ENCODE measurements at regions of chr1 and their contacts with region 1.

Region 1: DNA sequence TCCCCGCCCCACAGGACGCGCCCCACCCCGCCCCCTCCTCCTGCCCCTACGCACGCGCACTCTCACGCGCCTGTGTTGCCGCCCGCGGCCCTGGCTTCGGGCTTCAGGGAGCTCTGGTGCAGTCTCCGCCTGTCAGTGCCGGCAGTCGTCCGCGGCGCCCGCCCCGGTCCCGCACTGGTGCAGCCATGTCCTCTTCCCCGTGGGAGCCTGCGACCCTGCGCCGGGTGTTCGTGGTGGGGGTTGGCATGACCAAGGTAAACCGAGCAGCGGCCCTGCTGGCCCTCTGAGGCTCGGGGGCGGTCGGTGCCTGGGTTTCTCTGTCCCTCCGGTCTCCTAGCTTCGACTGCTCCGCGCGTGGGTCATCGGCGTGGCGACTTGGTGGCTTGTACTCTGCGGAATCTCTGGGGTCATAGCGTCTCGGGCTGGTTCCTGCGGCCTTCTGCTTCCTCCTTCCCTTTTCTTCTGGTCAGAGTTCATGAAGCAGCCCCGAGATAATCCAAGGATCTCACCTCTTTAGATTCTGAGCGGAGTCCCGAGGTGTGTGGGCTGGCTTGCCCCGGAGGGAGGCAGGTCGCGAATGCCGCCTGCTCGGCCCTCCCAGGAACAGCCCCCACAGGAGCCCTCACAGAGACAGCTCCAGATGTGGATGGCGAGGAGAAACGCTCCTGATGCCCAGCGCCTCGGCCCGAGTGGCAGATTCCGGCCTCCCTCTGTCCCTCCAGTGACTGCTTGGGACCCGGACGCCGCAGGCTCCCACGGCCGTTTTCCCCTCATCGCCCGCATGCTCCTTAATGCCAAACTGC is at the start of gene SCP2:
- DNase-seq: peak; percentile 60 to 67
- ATAC-seq: peak; percentile 94 to 98
- H3K4me3 ChIP-seq: peak within 1 kb of the TSS; percentile 66
- H3K27ac ChIP-seq: peak within 1 kb of the TSS; percentile 69 to 98
- H3K4me1 ChIP-seq: peaks cover 6% of the 10 kb centered on the region; the same call in 1 of the 3 replicates
- CTCF ChIP-seq: no peak
- EP300 ChIP-seq: no peak
- POLR2A ChIP-seq: peak; percentile 42
- RAD21 ChIP-seq: no peak
- polyA plus RNA-seq, gene SCP2: 74.7 and 124 TPM in 2 replicates

Region 2: DNA sequence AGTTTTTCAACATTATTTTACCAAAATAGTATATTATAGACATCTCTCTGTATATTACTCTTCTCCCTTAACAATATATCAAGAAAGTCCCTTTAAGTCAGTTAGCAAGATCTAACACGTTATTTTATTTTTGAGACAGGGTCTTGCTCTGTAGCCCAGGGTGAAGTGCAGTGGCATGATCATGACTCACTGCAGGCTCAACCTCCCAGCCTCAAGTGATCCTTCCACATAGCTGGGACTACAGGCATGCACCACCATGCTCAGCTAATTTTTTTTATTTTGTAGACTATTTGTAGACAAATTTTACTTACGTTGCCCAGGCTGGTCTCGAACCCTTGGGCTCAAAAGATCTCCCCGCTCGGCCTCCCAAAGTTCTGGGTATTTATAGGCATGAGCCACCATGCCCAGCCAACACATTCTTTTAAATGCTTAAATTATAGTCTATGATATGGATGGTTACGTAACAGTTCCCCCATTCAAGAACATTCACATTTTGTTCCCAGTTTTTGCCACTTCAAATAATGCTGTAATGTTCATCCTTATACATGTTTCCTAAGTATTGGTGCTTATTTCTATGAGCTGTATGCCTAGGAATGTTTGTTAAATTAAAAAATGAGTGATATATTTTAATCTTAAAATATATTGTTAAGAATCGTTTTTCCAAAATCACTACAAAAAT is 444.9 kb before region 1 on chr1:
- CTCF ChIA-PET with region 1: no interaction called
- POLR2A ChIA-PET with region 1: no interaction called
- DNase-seq: no peak
- ATAC-seq: no peak
- H3K4me3 ChIP-seq: no peak overlapping the region
- H3K27ac ChIP-seq: no peak overlapping the region
- H3K4me1 ChIP-seq: no peaks in the 10 kb centered on the region
- CTCF ChIP-seq: no peak
- EP300 ChIP-seq: no peak
- POLR2A ChIP-seq: no peak
- RAD21 ChIP-seq: no peak

Region 3: DNA sequence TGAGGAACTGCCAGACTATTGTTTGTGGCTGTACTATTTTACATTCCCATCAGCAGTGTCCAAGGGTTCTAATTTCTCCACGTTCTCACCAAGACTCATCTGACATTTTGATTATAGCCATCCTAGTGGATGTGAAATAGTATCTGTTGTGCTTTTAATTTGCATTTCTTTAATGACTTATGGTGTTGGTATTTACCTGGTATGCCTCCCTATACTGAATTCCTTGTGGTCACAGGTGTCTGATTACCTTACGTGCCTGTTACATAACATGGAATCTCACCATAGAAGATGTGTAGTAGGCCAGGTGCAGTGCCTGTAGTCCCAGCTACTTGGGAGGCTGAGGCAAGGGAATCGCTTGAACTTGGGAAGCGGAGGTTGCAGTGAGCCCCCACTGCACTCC is 71.4 kb before region 1 on chr1:
- CTCF ChIA-PET with region 1: no interaction called
- POLR2A ChIA-PET with region 1: no interaction called
- DNase-seq: no peak
- ATAC-seq: no peak
- H3K4me3 ChIP-seq: no peak overlapping the region
- H3K27ac ChIP-seq: no peak overlapping the region
- H3K4me1 ChIP-seq: no peaks in the 10 kb centered on the region
- CTCF ChIP-seq: no peak
- EP300 ChIP-seq: no peak
- POLR2A ChIP-seq: no peak
- RAD21 ChIP-seq: no peak

Region 4: GRCh38 chr1:52943876-52944416 is 16.5 kb after region 1 on chr1:
- CTCF ChIA-PET with region 1: no interaction called
- POLR2A ChIA-PET with region 1: no interaction called
- DNase-seq: no peak
- ATAC-seq: no peak
- H3K4me3 ChIP-seq: no peak overlapping the region
- H3K27ac ChIP-seq: no peak overlapping the region
- H3K4me1 ChIP-seq: 0 out of 3 replicates have a peak, but pooled peaks cover 2% of the 10 kb centered on the region
- CTCF ChIP-seq: no peak
- EP300 ChIP-seq: no peak
- POLR2A ChIP-seq: no peak
- RAD21 ChIP-seq: no peak

Region 5: DNA sequence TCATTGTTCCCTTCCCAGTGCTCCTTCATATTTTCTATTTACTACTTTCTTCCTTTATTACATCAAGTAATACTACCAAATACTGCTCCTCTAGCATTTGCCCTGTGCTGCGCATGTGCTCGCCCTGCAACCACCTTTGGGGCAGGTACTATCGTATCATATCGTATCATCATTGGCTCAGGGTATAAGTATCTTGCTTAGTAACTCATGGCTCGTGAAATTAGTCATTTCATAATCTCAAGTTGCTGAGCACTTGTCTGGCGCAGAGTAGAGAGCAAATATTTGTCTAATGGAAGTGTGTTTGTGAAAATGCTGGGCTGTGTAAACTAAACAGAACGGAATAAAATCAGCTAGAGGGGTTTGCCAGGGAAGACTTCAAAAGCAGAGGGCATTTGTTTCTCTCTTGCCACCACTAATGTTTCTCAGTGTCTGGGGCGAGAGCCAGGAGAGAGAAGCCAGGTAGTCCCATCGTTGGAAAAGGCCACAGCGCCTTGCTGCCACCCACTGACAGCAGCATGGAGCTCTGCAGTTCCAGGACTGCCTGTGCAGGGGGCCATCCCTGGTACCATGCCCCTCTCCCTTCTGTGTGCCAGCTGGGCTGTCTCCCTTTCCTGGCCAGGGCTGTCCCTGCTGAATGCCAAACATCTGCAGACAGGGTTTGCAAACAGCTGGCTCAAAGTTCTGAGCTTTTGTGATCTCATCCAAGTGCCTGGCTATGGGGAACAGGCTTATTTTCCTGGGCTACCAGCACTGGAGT is 249.2 kb after region 1 on chr1:
- CTCF ChIA-PET with region 1: interaction called, 14 read pairs
- POLR2A ChIA-PET with region 1: no interaction called
- DNase-seq: peak in 1 of 2 experiments; percentile 71
- ATAC-seq: peak; percentile 68 to 83
- H3K4me3 ChIP-seq: no peak overlapping the region
- H3K27ac ChIP-seq: peak overlapping the region; percentile 47 to 62; a peak in 5 of 6 replicates
- H3K4me1 ChIP-seq: peaks cover 37% of the 10 kb centered on the region
- CTCF ChIP-seq: peak; percentile 52
- EP300 ChIP-seq: no peak
- POLR2A ChIP-seq: no peak
- RAD21 ChIP-seq: peak; percentile 76 to 84